ENCODE measurements at regions of chr14 and their contacts with region 1.

Region 1: DNA sequence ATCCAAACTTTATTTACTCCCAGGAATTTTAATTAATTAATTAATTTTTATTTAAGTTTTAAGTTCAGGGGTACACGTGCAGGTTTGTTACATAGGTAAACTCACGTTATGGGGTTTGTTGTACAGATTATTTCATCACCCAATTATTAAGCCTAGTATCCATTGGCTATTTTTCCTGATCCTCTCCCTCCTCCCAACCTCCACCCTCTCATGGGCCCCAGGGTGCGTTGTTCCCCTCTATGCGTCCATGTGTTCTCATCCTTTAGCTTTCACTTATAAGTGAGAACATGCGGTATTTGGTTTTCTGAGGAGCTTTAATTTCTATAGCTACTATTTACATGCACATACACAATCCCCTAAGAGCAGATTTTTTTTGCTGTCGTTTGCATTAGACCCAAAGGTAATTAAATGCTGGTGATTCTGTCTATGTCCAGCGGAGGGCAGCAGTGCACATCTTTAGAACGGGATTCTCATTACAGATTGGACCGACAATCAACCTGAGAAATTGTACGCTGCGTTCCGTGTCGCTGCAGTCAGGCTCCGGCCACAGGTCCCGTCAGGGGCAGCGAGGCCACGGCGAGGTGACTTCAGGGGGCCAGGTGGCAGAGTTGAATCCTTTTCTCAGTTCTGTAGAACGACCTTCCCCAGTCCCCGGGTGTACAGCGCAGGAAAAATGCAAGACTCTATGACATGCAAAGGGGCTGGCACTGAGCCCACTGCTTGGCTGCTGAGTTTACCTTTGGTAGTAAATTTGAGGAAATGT is 11.6 kb downstream of the TMEM30B start:
- DNase-seq: peak; percentile 71 to 77 (median 74)
- H3K4me3 ChIP-seq: peak overlapping the region in 1 of 2 donors; percentile 29
- H3K4me3 Mint-ChIP-seq: peak overlapping the region in 7 of 8 donors; percentile 58 to 83 (median 79)
- H3K27ac ChIP-seq: no peak overlapping the region
- H3K27ac Mint-ChIP-seq: no peak overlapping the region
- H3K4me1 ChIP-seq: peaks cover 5% of the 10 kb centered on the region
- H3K4me1 Mint-ChIP-seq: peaks cover 0 to 7% (median 2%) of the 10 kb centered on the region in 4 donors
- H3K27me3 ChIP-seq: peaks cover 5% of the 10 kb centered on the region
- H3K27me3 Mint-ChIP-seq: peaks cover 24 to 30% of the 10 kb centered on the region in 2 donors

Region 2: DNA sequence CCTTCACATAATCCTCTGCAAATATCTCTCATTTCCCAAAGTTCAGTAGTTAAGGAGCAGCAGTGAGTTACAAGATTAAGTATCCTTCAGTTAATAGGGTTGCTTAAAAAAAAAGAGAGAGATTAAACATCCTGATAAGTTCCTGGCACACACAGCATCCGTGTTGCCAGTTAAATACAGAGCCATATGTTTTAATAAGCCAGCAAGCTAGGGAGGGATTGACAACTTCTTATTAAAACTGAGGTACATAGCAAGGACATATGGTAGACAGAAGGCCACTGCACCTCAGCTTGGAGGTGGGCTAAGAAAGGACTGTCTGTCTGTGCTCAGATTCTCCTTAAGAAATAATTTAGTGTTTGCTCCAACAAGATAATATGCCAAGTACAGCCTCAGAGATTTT is 21.2 kb after region 1 on chr14:
- CTCF ChIA-PET with region 1: interaction called, 152 read pairs
- POLR2A ChIA-PET with region 1: interaction called, 4 read pairs
- intact Hi-C with region 1: loop called (anchors 1 kb)
- DNase-seq: no peak
- H3K4me3 ChIP-seq: no peak overlapping the region
- H3K4me3 Mint-ChIP-seq: no peak overlapping the region
- H3K27ac ChIP-seq: no peak overlapping the region
- H3K27ac Mint-ChIP-seq: no peak overlapping the region
- H3K4me1 ChIP-seq: peaks cover 7% of the 10 kb centered on the region
- H3K4me1 Mint-ChIP-seq: peaks cover 3 to 7% (median 5%) of the 10 kb centered on the region in 4 donors
- H3K27me3 ChIP-seq: no peaks in the 10 kb centered on the region
- H3K27me3 Mint-ChIP-seq: no peaks in the 10 kb centered on the region

Region 3: DNA sequence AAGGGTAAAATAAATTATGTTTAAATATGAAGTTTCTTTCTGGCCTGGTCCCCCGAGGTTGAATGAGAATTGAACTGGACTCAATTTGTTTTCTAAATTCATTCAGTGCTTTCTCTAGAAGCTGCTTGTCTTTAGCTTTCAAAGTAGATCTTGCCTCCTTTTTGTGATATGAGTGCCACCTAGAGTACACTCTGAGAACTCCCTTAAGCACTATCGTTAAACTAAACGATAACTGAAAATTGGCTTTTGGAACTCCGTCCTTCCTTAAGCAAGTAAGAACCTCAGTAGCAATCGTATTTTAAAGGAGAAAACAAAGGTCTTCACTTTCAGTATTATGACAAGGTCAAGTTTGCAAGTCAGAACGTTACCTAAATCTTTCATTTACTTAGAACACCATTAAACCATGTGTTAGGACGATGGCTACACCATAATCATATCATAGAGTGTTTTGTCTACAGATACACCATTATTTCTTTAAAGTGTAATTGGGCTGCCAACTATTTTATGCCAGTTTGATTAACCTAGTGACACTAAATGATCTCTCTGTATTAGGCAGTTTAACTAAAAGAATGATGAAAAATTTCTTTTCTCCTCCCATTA is 857.5 kb after region 1 on chr14:
- CTCF ChIA-PET with region 1: no interaction called
- POLR2A ChIA-PET with region 1: no interaction called
- intact Hi-C with region 1: loop called (anchors 1 kb)
- DNase-seq: peak in 4 of 5 donors; percentile 16 to 34 (median 30)
- H3K4me3 ChIP-seq: no peak overlapping the region
- H3K4me3 Mint-ChIP-seq: no peak overlapping the region
- H3K27ac ChIP-seq: no peak overlapping the region
- H3K27ac Mint-ChIP-seq: no peak overlapping the region
- H3K4me1 ChIP-seq: no peaks in the 10 kb centered on the region
- H3K4me1 Mint-ChIP-seq: no peaks in the 10 kb centered on the region
- H3K27me3 ChIP-seq: peaks cover 7% of the 10 kb centered on the region
- H3K27me3 Mint-ChIP-seq: peaks cover 21 to 22% of the 10 kb centered on the region in 2 donors

Measured in CD4-positive, alpha-beta memory T cell (primary cell).